K562 (cell line): ENCODE measurements at regions of chr2 and their contacts with region 1.

Region 1: DNA sequence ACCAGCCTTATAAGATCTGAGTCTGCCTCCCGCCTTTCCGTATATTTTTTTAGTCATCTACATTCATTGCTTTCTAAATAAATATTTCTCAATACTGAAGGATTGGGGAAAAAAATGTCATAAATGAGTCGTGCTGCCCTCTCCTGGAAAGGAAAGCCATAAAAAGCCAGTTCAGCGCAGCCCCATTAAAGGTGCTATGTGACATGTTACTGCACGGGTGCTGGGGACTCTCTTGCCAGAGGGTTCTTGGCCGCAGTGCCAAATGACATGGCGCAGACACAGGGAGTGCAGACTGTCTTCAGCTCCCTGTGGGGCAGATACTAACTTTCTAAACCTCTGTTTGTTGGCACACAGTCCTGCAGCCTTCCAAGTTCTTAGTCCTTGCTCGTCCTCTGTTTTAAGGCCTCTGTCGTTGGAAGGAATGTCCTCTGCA is 53.7 kb upstream of the MAP3K20 start:
- DNase-seq: peak in 3 of 4 experiments; percentile 19 to 26 (median 25)
- ATAC-seq: peak; percentile 76
- H3K4me3 ChIP-seq: no peak overlapping the region
- H3K27ac ChIP-seq: no peak overlapping the region
- H3K4me1 ChIP-seq: no peaks in the 10 kb centered on the region
- H3K27me3 ChIP-seq: peaks cover 58 to 63% of the 10 kb centered on the region in 2 experiments
- CTCF ChIP-seq: peak in 2 of 3 experiments; percentile 47 to 49; a peak in 4 of 6 replicates
- EP300 ChIP-seq: no peak
- POLR2A ChIP-seq: no peak
- RAD21 ChIP-seq: peak in 1 of 2 experiments; percentile 39; a peak in 2 of 4 replicates

Region 2: DNA sequence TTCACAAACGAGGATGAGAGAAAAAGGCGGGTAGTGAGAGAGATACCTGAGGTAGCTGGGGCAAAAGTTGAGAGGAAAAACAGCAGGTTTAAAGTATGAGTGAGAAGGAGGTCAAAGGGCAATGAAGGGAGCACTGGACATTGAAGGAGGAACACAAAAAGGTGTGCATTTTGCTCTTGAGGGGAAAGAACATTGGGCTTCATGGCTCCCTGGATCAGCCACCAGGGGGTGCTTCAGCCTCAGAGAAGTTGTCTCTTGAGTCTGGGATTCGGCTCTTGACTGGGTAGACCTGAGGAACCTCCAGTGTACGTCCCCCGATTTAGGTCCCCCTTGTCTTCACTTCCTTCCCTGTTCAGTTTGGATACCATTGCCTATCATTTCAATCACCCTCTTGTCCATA is 157.8 kb before region 1 on chr2:
- CTCF ChIA-PET with region 1: no interaction called
- POLR2A ChIA-PET with region 1: no interaction called
- in situ Hi-C with region 1: no loop called
- intact Hi-C with region 1: loop called (anchors 2 kb)
- DNase-seq: peak; percentile 42 to 66 (median 56)
- ATAC-seq: peak; percentile 95
- H3K4me3 ChIP-seq: no peak overlapping the region
- H3K27ac ChIP-seq: no peak overlapping the region
- H3K4me1 ChIP-seq: no peaks in the 10 kb centered on the region
- H3K27me3 ChIP-seq: no peaks in the 10 kb centered on the region; a peak in 2 of 5 replicates
- CTCF ChIP-seq: peak; percentile 76 to 87 (median 86)
- EP300 ChIP-seq: no peak
- POLR2A ChIP-seq: no peak
- RAD21 ChIP-seq: peak; percentile 78 to 92